Activated CD8-positive, alpha-beta memory T cell treated with anti-CD3 and anti-CD28 coated beads, Interleukin-2, amount 10 ng/mL, durations not matched to agents 7 days and 5 days (primary cell): ENCODE measurements at regions of chr1 and their contacts with region 1.

Region 1: GRCh38 chr1:201828820-201829774 is at the start of gene IPO9:
- DNase-seq: peak; percentile 96
- ATAC-seq: peak; percentile 95
- H3K4me3 Mint-ChIP-seq: peak within 1 kb of the TSS; percentile 99
- H3K27ac Mint-ChIP-seq: peak within 1 kb of the TSS; percentile 96
- H3K4me1 Mint-ChIP-seq: peaks cover 40% of the 10 kb centered on the region
- H3K27me3 Mint-ChIP-seq: no peaks in the 10 kb centered on the region
- total RNA-seq, gene IPO9: 64.7 to 72.0 TPM

Region 2: DNA sequence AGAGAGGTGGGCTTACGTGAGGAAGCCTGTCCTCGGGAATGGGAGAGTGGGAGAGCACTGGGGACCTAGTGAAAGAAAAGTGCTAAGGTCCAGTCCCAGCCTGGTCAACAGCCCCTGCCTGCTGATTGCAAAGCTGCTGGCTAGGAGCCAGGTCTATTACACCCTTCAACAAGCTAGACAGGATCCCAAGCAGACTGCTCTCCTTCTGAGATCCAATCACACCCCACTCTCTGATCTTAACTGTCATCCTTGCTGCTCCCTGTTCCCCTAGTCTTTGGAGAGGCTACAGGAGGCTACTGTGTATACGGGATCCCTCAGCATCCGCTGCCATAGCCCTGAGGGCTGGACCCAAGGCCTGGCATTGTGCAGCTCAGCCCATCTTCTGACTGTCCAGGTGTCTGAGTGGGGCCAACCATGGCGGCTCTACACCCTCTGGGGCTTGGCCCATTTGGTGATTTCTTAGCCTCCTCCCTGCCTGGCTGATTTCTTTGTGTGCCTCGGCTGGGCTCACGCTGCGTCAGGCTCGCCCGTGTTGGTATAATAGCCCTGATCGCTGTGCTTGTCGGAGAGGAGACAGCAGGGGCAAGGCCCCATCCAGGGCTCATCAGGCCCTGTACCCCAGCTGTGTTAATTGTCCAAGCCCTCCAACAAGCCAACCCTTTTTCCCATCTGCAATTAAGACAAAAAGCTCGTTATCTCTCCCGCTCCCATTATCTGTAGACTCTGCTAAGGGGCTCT is 246.2 kb before region 1 on chr1:
- CTCF ChIA-PET with region 1: no interaction called
- DNase-seq: no peak
- ATAC-seq: no peak
- H3K4me3 Mint-ChIP-seq: no peak overlapping the region
- H3K27ac Mint-ChIP-seq: no peak overlapping the region
- H3K4me1 Mint-ChIP-seq: peaks cover under 1% of the 10 kb centered on the region
- H3K27me3 Mint-ChIP-seq: peaks cover 24% of the 10 kb centered on the region

Region 3: GRCh38 chr1:201774224-201774982 is 54.7 kb before region 1 on chr1:
- CTCF ChIA-PET with region 1: no interaction called
- DNase-seq: no peak
- ATAC-seq: no peak
- H3K4me3 Mint-ChIP-seq: no peak overlapping the region
- H3K27ac Mint-ChIP-seq: no peak overlapping the region
- H3K4me1 Mint-ChIP-seq: no peaks in the 10 kb centered on the region
- H3K27me3 Mint-ChIP-seq: peaks cover 4% of the 10 kb centered on the region

Region 4: DNA sequence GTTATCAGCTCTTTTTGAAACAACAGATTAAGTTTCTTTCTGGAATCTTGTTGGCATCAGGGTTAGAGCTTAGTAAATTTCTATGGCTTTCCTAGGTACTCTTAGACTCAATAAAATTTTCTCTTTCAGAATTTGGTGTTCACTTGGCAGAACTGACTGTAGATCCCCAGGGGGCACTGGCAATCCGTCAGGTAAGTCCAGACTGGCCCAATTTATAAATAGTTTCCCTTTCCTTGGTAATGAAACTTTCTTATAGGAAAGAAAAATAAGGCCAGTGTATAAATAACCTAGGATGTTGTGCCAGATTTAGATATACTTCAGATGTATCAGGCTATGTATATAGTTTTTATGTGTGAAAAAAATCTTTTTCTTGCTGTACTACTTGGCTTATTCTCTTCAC is 18.1 kb after region 1 on chr1:
- CTCF ChIA-PET with region 1: interaction called, 10 read pairs
- DNase-seq: no peak
- ATAC-seq: no peak
- H3K4me3 Mint-ChIP-seq: no peak overlapping the region
- H3K27ac Mint-ChIP-seq: no peak overlapping the region
- H3K4me1 Mint-ChIP-seq: peaks cover 17% of the 10 kb centered on the region
- H3K27me3 Mint-ChIP-seq: no peaks in the 10 kb centered on the region